ENCODE measurements at regions of chr3 and their contacts with region 1.

Region 1: DNA sequence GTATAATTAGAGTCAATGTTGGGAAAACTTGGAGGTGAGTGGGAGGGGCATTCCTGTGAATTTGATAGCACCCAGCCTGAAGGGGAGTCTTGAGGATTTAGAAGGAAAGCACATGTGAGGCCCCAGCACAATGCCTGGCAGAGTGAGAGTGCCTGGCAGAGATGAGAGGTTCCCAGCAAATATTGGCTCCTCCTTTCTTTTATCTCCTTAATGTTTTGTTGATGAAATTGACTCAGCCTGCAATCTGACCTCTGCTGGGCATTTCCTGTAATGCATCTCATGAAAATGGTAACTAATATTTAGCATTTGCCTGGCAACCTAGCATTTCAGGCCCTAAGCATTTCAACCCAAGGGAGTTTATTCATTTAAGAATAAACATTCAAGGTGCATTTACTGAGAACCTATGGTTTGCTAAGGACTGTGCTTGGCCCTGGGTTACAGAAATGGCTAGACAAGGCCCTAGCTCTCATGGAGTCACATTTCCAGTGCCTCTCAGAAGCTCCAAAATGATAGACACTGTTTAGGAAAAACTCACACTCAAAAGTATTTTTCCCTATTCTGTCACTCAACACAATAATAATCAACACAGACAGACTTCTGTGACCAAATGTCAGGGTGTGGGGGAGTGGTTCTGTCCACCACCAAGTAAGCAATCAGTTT is 19.0 kb downstream of the PDHB start:
- DNase-seq: peak; percentile 70
- H3K4me3 ChIP-seq: no peak overlapping the region
- H3K27ac ChIP-seq: no peak overlapping the region
- H3K4me1 ChIP-seq: peaks cover 9% of the 10 kb centered on the region
- H3K27me3 ChIP-seq: no peaks in the 10 kb centered on the region
- CTCF ChIP-seq: peak; percentile 81 to 84 (median 82)
- POLR2A ChIP-seq: no peak

Region 2: GRCh38 chr3:58324391-58325390 is 90.0 kb before region 1 on chr3:
- intact Hi-C with region 1: loop called (anchors 10 kb)
- DNase-seq: no peak
- H3K4me3 ChIP-seq: no peak overlapping the region
- H3K27ac ChIP-seq: no peak overlapping the region
- H3K4me1 ChIP-seq: peaks cover 4% of the 10 kb centered on the region
- H3K27me3 ChIP-seq: no peaks in the 10 kb centered on the region
- CTCF ChIP-seq: no peak
- POLR2A ChIP-seq: no peak

Region 3: GRCh38 chr3:58336135-58336882 is 78.4 kb before region 1 on chr3:
- intact Hi-C with region 1: no loop called
- DNase-seq: no peak
- H3K4me3 ChIP-seq: no peak overlapping the region
- H3K27ac ChIP-seq: no peak overlapping the region
- H3K4me1 ChIP-seq: peaks cover 10% of the 10 kb centered on the region
- H3K27me3 ChIP-seq: no peaks in the 10 kb centered on the region
- CTCF ChIP-seq: no peak
- POLR2A ChIP-seq: no peak

Measured in testis (tissue), 5 donors.